HepG2 (cell line): ENCODE measurements at regions of chr20 and their contacts with region 1.

Region 1: GRCh38 chr20:49713753-49714712 is at the start of gene B4GALT5:
- DNase-seq: peak; percentile 66
- ATAC-seq: peak; percentile 80
- H3K4me3 ChIP-seq: peak within 1 kb of the TSS; percentile 87 to 97 (median 95)
- H3K27ac ChIP-seq: peak within 1 kb of the TSS; percentile 86
- H3K4me1 ChIP-seq: peaks cover 65% of the 10 kb centered on the region
- H3K27me3 ChIP-seq: no peaks in the 10 kb centered on the region; a peak in 1 of 5 replicates
- CTCF ChIP-seq: no peak
- EP300 ChIP-seq: no peak
- POLR2A ChIP-seq: peak; percentile 44 to 81; a peak in 3 of 4 replicates
- RAD21 ChIP-seq: peak; percentile 60
- total RNA-seq, gene B4GALT5: 26.7 and 30.9 TPM in 2 replicates

Region 2: DNA sequence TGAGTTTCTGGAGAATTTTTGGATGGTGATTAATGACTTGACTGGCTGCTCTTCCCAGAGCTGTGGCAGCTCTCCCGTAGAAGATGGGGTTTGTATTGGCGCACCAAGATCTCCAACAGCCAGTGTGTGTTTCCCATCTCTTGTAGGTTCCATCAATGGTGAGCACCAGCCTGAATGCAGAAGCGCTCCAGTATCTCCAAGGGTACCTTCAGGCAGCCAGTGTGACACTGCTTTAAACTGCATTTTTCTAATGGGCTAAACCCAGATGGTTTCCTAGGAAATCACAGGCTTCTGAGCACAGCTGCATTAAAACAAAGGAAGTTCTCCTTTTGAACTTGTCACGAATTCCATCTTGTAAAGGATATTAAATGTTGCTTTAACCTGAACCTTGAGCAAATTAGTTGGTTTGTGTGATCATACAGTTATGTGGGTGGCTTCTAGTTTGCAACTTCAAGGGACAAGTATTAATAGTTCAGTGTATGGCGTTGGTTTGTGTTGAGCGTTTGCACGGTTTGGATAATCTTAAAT is 617.8 kb before region 1 on chr20:
- CTCF ChIA-PET with region 1: no interaction called
- POLR2A ChIA-PET with region 1: no interaction called
- in situ Hi-C with region 1: no loop called
- intact Hi-C with region 1: no loop called
- DNase-seq: no peak
- ATAC-seq: no peak
- H3K4me3 ChIP-seq: no peak overlapping the region
- H3K27ac ChIP-seq: no peak overlapping the region
- H3K4me1 ChIP-seq: peaks cover 7% of the 10 kb centered on the region
- H3K27me3 ChIP-seq: no peaks in the 10 kb centered on the region
- CTCF ChIP-seq: no peak
- EP300 ChIP-seq: no peak
- POLR2A ChIP-seq: no peak
- RAD21 ChIP-seq: no peak

Region 3: GRCh38 chr20:49661560-49662329 is 52.3 kb before region 1 on chr20:
- CTCF ChIA-PET with region 1: no interaction called
- POLR2A ChIA-PET with region 1: no interaction called
- in situ Hi-C with region 1: no loop called
- intact Hi-C with region 1: loop called (anchors 5 kb)
- DNase-seq: peak; percentile 82
- ATAC-seq: peak; percentile 89
- H3K4me3 ChIP-seq: peak overlapping the region in 1 of 3 experiments; percentile 1; a peak in 1 of 6 replicates
- H3K27ac ChIP-seq: peak overlapping the region; percentile 54
- H3K4me1 ChIP-seq: peaks cover 65% of the 10 kb centered on the region
- H3K27me3 ChIP-seq: no peaks in the 10 kb centered on the region
- CTCF ChIP-seq: peak; percentile 8; the same call in 1 of the 2 replicates
- EP300 ChIP-seq: no peak
- POLR2A ChIP-seq: no peak
- RAD21 ChIP-seq: no peak

Region 4: DNA sequence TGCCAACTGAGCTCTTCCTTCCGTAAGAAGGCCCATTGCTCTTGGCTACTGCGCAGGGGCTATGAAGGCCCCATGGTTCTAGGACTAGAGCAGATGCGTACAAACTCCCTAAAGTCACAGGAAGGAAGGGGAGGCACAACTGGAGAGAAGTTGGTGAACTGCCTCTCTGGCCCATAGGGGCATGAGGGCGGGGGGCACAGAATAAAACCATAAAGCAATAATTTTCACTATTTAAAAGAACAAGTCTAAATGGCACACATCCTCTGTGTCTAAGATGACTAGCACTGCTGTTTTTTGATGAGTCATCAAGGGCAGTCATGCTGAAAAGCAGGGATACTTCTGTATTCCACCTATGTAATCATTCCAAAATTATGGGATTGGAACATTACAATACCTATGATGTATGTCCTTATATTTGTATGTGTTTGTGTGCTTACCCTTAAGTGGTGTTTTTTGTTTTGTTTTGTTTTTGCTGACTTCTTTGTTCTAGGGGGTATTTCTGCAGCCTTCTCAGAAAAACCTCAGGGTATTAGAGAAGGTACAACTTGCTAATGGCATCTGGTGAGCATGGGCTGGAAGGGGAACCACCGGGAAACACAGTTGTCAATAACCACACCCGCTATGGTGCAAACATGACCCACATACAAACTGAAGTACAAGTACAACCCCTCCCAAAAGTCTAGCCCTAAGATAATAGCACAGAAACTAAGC is 37.3 kb before region 1 on chr20:
- CTCF ChIA-PET with region 1: no interaction called
- POLR2A ChIA-PET with region 1: interaction called, 10 read pairs
- in situ Hi-C with region 1: no loop called
- intact Hi-C with region 1: no loop called
- DNase-seq: peak; percentile 50
- ATAC-seq: no peak
- H3K4me3 ChIP-seq: peak overlapping the region in 1 of 3 experiments; percentile 6; a peak in 1 of 6 replicates
- H3K27ac ChIP-seq: peak overlapping the region; percentile 93
- H3K4me1 ChIP-seq: peaks cover 96% of the 10 kb centered on the region
- H3K27me3 ChIP-seq: no peaks in the 10 kb centered on the region
- CTCF ChIP-seq: no peak
- EP300 ChIP-seq: 0 out of 4 replicates have a peak, but pooled peaks of 1 of the 2 experiments have one; percentile 21
- POLR2A ChIP-seq: no peak
- RAD21 ChIP-seq: no peak

Region 5: GRCh38 chr20:49690899-49691620 is 23.0 kb before region 1 on chr20:
- CTCF ChIA-PET with region 1: no interaction called
- POLR2A ChIA-PET with region 1: interaction called, 6 read pairs
- in situ Hi-C with region 1: no loop called
- intact Hi-C with region 1: loop called (anchors 1 kb)
- DNase-seq: peak; percentile 96
- ATAC-seq: peak; percentile 91
- H3K4me3 ChIP-seq: peak overlapping the region; percentile 35 to 55 (median 36)
- H3K27ac ChIP-seq: peak overlapping the region; percentile 82
- H3K4me1 ChIP-seq: peaks cover 99% of the 10 kb centered on the region
- H3K27me3 ChIP-seq: no peaks in the 10 kb centered on the region
- CTCF ChIP-seq: peak; percentile 17; the same call in 1 of the 2 replicates
- EP300 ChIP-seq: peak; percentile 84 to 90
- POLR2A ChIP-seq: peak in 1 of 2 experiments; percentile 37; a peak in 1 of 4 replicates
- RAD21 ChIP-seq: peak; percentile 45

Region 6: DNA sequence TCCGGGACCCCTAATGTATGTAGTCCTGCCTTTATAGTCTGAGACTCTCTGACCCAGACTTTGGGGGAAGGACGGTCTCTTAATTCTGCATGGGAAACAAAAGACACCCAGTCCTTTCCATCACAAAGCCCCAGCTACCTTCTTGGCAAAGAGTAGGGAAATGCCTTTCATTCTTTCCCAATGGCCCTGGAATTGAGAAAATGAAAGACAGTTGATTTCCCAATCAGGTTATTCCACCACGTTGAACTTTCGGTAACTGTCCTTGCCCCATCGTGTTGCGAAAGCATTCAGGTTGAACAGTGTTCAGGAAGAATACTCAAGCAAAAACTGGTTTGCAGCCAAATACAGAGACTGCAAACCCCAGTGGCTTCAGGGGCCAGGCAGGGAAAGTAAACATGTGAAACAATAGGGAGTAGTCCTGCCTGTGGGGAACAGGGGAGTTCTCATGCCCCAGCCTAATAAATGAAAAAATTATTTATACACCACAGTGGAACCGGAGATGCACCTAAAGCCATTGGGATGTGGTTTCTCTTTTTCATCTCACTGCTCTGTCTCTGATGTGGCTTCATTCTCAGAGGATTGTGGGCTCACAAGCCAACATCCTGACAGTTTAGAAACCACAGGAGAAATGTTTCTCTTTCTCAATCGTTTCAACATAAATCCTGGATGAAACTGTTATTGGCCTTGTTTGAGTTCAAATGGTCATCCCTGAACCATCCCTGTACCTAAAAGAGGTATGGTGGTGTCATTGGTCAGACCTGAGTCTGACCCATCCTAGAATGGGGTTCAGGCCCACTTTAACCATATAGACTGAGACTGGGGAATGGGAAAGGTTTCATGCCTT is 54.4 kb after region 1 on chr20:
- CTCF ChIA-PET with region 1: no interaction called
- POLR2A ChIA-PET with region 1: no interaction called
- in situ Hi-C with region 1: no loop called
- intact Hi-C with region 1: loop called (anchors 1 kb)
- DNase-seq: peak; percentile 100
- ATAC-seq: peak; percentile 85
- H3K4me3 ChIP-seq: peak overlapping the region in 2 of 3 experiments; percentile 11 to 45; a peak in 2 of 6 replicates
- H3K27ac ChIP-seq: peak overlapping the region; percentile 85
- H3K4me1 ChIP-seq: peaks cover 84% of the 10 kb centered on the region
- H3K27me3 ChIP-seq: no peaks in the 10 kb centered on the region
- CTCF ChIP-seq: peak; percentile 25
- EP300 ChIP-seq: peak; percentile 99 to 100
- POLR2A ChIP-seq: peak in 1 of 2 experiments; percentile 61; a peak in 2 of 4 replicates
- RAD21 ChIP-seq: peak; percentile 62